MCF 10A (cell line): ENCODE measurements at regions of chr1 and their contacts with region 1.

Region 1: DNA sequence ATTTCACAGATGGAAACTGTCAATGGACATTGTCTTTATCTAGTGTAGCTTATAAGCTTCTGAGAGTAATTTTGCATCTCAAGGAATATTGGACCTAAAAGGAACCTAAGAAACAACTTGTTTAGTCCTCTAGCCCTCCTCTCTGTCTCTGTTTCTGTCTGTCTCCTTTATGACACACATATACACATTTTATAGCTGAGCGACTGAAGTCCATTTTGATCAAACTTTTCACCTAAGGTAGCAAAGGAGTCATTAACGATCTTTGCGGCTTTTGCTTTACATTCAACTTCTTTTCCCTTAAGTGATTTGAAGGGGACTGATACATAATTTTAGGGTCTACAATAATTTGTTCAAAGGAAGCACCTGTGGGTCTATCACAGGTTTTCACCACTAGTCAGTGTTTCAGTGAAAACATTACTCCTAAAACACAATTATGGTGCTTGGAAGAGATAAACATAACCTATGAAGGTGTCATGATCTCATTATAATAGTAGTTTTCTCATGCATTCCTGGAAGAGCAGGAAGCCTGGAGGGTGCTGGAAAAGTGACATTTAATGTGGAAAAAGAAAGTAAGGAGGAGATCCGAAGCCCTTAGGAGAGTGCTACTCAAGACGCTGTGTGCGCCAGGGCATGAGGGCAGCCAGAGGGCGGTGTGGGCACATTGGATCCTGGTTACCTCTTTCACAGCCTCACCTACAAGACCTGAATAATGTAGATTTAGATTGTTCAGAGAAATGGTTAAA is 248.6 kb downstream of the DNM3 start:
- DNase-seq: peak; percentile 79
- H3K4me3 Mint-ChIP-seq: no peak overlapping the region
- H3K27ac Mint-ChIP-seq: no peak overlapping the region
- H3K4me1 Mint-ChIP-seq: peaks cover 8% of the 10 kb centered on the region
- H3K27me3 Mint-ChIP-seq: no peaks in the 10 kb centered on the region
- CTCF ChIP-seq: peak; percentile 97

Region 2: GRCh38 chr1:171961861-171962260 is 128.1 kb before region 1 on chr1:
- CTCF ChIA-PET with region 1: no interaction called
- POLR2A ChIA-PET with region 1: no interaction called
- intact Hi-C with region 1: no loop called
- DNase-seq: no peak
- H3K4me3 Mint-ChIP-seq: no peak overlapping the region
- H3K27ac Mint-ChIP-seq: no peak overlapping the region
- H3K4me1 Mint-ChIP-seq: no peaks in the 10 kb centered on the region
- H3K27me3 Mint-ChIP-seq: no peaks in the 10 kb centered on the region
- CTCF ChIP-seq: no peak

Region 3: DNA sequence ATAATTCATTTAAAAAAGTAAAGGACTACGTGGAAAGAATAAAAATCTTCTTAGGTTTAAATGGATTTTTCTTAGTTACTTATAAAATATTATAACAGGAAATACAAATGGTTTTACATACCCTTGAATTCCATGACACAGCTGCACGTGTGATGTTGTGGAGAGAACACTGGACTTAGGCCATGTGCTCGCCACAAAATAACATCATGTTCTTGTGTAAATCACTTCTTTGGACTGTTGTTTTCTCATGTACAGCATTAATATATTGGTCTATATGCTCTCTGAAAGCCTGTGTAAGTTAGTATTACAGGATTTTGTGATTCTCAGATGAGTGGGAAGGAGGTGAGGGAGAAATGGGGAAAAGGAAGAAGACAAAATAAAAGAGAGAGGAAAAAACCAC is 20.4 kb before region 1 on chr1:
- CTCF ChIA-PET with region 1: interaction called, 25 read pairs
- POLR2A ChIA-PET with region 1: interaction called, 3 read pairs
- intact Hi-C with region 1: no loop called
- DNase-seq: no peak
- H3K4me3 Mint-ChIP-seq: no peak overlapping the region
- H3K27ac Mint-ChIP-seq: peak overlapping the region; percentile 63
- H3K4me1 Mint-ChIP-seq: peaks cover 7% of the 10 kb centered on the region
- H3K27me3 Mint-ChIP-seq: no peaks in the 10 kb centered on the region
- CTCF ChIP-seq: no peak

Region 4: GRCh38 chr1:172241540-172241939 is 151.6 kb after region 1 on chr1:
- CTCF ChIA-PET with region 1: no interaction called
- POLR2A ChIA-PET with region 1: no interaction called
- intact Hi-C with region 1: no loop called
- DNase-seq: no peak
- H3K4me3 Mint-ChIP-seq: no peak overlapping the region
- H3K27ac Mint-ChIP-seq: no peak overlapping the region
- H3K4me1 Mint-ChIP-seq: no peaks in the 10 kb centered on the region
- H3K27me3 Mint-ChIP-seq: no peaks in the 10 kb centered on the region
- CTCF ChIP-seq: no peak

Region 5: DNA sequence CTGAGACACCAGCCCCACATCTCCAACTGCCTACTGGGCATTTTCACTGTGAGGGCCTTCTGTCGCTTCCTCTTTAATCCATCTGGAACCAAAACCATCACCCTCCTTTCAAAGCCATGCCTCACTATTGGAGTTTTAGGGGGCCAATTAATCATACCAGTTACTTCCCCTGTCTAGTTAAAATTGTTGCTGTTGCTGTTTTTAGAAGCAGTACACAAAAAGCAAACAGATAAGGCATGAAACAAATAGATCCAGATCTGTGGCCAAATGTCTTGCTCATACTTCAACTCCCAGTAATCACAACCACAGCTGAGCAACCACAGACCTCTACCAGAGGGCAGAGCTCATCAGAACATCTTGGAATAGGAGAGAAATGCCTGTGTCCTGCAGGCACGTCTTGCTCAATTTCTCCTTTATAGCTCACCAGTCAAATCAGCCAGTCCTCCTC is 196.7 kb after region 1 on chr1:
- CTCF ChIA-PET with region 1: interaction called, 6 read pairs
- POLR2A ChIA-PET with region 1: interaction called, 3 read pairs
- intact Hi-C with region 1: loop called (anchors 1 kb)
- DNase-seq: peak; percentile 94
- H3K4me3 Mint-ChIP-seq: no peak overlapping the region
- H3K27ac Mint-ChIP-seq: peak overlapping the region; percentile 61
- H3K4me1 Mint-ChIP-seq: peaks cover 26% of the 10 kb centered on the region
- H3K27me3 Mint-ChIP-seq: no peaks in the 10 kb centered on the region
- CTCF ChIP-seq: no peak

Region 6: DNA sequence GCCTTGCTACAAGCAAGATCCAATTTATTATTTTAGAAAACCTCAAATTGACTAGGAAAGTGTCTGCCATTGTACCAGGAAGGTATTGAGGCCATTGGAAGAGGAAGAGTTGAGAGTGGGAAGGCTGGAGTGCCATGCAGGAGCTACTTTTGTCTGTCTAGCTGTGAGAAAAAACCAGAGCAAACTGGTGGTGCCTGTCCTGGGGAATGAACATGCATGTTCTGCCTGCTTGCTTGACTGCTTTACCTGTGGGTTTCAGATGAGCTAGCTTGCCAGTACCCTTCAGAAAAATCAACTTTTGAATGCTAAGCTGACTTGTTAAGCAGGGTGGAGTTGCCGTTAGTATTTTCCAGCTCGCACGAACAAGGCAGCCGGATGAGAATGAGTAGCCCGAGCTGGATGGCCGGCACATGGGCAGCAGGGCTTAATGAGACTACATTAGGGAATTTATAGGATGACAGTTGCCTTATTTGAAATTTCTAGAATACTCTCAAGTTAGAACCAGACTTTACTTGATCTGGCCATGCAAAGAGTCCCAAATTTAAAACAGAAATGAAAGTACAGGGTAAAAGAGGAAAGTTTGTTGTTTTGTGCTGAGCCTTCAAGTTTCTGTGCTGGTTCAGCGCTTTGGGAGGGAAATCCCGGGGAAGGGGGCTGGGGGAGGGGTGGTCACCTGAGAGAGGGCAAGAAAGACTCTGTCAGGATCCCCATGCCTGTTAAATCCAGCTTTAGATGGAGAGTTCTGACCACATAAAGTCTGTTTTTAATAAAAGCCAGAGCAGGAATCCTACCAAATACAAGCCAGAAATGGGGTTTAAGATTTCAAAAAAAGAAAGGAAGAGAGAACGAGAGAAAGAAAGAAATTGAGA is 301.0 kb after region 1 on chr1:
- CTCF ChIA-PET with region 1: interaction called, 135 read pairs
- POLR2A ChIA-PET with region 1: interaction called, 3 read pairs
- intact Hi-C with region 1: no loop called
- DNase-seq: no peak
- H3K4me3 Mint-ChIP-seq: no peak overlapping the region
- H3K27ac Mint-ChIP-seq: no peak overlapping the region
- H3K4me1 Mint-ChIP-seq: peaks cover 12% of the 10 kb centered on the region
- H3K27me3 Mint-ChIP-seq: no peaks in the 10 kb centered on the region
- CTCF ChIP-seq: no peak

Region 7: DNA sequence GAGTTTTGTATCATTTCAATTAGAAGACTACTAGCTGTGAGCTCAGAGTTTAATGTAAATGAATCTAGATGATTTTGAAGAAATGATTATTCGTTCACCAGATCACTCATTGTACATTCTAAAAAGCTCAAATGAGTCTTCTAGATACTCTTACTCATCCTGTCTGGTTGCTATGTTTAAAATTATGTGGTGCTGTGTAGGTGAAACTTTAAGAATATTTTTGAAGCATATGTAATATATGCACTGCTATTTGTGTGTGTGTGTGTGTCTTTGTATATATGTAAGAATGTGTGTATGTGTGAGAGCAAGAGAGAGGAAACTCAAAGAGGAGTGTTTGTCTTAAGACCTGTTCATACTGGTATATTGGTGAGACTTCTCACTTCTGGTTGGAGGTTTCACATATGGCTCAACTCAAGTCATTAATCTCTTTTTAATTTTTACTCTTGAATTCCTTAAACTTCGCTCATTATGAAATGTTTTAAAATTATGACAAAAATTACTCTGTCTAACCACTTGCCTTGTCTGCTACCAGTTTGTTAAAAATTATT is 321.9 kb after region 1 on chr1:
- CTCF ChIA-PET with region 1: interaction called, 15 read pairs
- POLR2A ChIA-PET with region 1: no interaction called
- intact Hi-C with region 1: no loop called
- DNase-seq: no peak
- H3K4me3 Mint-ChIP-seq: no peak overlapping the region
- H3K27ac Mint-ChIP-seq: no peak overlapping the region
- H3K4me1 Mint-ChIP-seq: no peaks in the 10 kb centered on the region
- H3K27me3 Mint-ChIP-seq: no peaks in the 10 kb centered on the region
- CTCF ChIP-seq: no peak

Region 8: DNA sequence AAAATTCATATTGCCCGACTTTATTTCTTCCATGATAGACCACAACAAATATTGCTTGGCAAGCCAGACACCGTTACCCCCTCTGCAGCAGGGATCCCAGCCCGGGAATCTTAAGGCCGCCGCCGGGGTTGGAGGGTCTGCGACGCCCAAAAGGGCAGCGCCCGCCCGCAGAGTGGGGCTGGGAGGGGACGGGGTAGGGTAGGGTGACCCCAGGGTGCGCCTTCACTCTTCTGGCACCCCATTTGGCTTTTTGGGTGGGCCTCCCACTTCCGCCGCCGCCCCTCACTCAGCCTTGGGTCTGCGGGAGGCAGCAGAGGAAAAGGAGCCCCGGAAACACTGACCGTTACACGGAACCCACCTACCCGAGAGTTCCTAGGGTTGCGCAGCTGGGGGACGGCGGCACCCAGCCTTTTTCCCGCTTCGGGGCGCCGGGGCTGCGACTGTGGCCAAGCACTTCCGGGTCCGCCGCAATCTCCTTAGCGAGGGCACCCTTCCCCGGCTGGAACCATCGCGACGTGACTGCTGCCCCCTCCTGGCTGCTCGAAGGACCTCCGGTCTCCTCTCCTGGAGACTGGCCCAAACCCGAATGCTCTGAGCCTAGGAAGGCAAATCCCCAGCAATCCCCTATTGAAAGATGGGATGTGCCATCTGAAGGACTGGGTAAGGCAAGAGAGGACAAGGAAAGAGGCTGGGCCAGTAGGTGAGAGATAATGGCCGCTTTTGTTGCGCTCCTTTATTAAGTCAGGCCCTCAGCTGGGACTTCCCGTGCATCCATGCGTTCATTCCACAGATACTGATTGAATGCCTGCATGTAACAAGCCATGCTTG is 353.9 kb after region 1 on chr1 and contains the start of gene PIGC:
- CTCF ChIA-PET with region 1: interaction called, 5 read pairs
- POLR2A ChIA-PET with region 1: no interaction called
- intact Hi-C with region 1: loop called (anchors 1 kb)
- DNase-seq: peak; percentile 93
- H3K4me3 Mint-ChIP-seq: peak within 1 kb of the TSS; percentile 85
- H3K27ac Mint-ChIP-seq: peak within 1 kb of the TSS; percentile 92
- H3K4me1 Mint-ChIP-seq: peaks cover 33% of the 10 kb centered on the region
- H3K27me3 Mint-ChIP-seq: no peaks in the 10 kb centered on the region
- CTCF ChIP-seq: peak; percentile 87
- total RNA-seq, gene PIGC: 20.2 and 23.1 TPM in 2 replicates